CD4-positive, alpha-beta T cell (primary cell): ENCODE measurements at regions of chr16 and their contacts with region 1.

Region 1: DNA sequence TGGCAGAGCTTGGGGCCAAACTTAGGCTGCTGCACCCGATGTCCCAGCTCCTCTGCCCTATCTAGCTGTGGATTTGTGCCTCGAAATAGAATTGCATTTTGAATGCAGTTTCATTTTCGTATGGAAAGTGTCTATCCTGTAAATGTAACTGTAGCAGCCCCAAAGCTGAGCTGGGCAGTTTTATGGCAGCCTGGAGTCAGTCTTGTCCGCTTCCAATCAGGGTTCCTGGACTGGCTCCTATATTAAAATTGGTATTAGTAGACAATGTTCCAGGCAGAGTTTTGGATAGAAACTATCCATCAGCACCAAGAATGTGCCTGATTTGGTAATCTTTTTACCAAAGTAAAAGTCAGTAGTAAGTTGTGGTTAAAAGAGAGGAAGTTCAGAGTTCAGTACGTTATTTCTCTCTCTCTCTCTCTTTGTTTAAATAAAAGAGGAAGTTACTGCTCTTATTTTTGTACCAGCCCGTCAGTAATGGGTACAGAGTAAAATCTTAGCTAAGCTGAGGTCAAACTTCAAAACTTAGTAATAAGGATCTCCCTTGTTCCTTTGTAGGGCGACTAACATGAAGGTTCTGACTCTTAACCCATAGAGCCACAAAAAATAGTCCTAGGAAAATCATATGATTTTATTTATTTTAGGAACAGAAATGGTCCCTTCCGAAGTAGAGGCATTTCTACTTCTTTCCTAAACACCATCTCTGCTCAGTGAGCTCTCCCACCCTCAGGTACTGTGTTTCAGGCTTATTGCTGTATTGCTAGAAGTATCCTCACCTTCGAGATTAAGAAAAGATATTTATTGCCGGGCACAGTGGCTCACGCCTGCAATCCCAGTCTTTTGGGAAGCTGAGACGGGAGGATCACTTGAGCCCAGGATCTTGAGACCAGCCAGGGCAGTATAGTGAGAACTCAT is 28.0 kb downstream of the PRKCB start:
- DNase-seq: peak in 4 of 14 experiments; percentile 7 to 79 (median 64)
- ATAC-seq: peak; percentile 88
- H3K4me3 ChIP-seq: peak overlapping the region; percentile 43
- H3K4me3 Mint-ChIP-seq: peak overlapping the region; percentile 88
- H3K27ac ChIP-seq: peak overlapping the region; percentile 39 to 69
- H3K27ac Mint-ChIP-seq: peak overlapping the region; percentile 90
- H3K4me1 ChIP-seq: peaks cover 61% of the 10 kb centered on the region
- H3K4me1 Mint-ChIP-seq: peaks cover 86% of the 10 kb centered on the region
- H3K27me3 ChIP-seq: no peaks in the 10 kb centered on the region
- H3K27me3 Mint-ChIP-seq: no peaks in the 10 kb centered on the region
- CTCF ChIP-seq: no peak

Region 2: DNA sequence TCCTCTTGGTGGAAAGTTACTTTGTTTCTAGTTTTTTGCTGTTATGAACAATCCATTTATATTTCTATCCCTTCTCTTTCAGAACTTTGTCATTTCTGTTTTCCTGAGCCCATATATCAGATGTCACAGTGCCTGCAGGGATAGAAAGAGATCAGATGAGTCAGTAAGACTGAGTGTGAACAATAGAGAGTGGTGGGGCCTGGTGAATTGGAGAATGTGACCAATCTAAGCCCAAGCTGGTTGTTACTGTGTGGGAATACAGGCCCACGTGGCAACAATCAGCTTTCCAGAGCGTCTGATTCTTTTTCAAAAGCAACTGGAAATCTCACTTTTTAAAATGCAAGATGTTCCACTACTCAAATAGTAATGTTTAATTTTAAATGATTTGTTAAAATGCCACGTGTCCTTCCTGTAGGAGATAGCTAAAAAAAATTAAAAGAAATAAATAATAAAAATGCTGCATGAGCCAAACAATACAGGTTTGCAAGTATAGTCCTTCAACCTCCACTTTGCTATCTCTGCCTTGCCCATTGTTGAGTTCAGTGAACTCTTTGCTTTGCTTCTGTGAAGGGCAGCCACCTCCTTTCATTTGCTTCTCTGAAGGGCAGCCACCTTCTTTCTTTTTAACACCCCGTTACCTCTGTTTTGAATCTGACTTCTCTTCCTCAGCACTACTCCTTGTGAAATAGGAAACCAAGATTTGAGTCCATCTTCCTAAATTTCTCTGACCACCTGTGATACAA is 212.9 kb before region 1 on chr16:
- CTCF ChIA-PET with region 1: no interaction called
- POLR2A ChIA-PET with region 1: no interaction called
- intact Hi-C with region 1: no loop called
- DNase-seq: no peak
- ATAC-seq: no peak
- H3K4me3 ChIP-seq: no peak overlapping the region
- H3K4me3 Mint-ChIP-seq: no peak overlapping the region
- H3K27ac ChIP-seq: no peak overlapping the region
- H3K27ac Mint-ChIP-seq: no peak overlapping the region
- H3K4me1 ChIP-seq: no peaks in the 10 kb centered on the region
- H3K4me1 Mint-ChIP-seq: peaks cover 37% of the 10 kb centered on the region
- H3K27me3 ChIP-seq: no peaks in the 10 kb centered on the region
- H3K27me3 Mint-ChIP-seq: no peaks in the 10 kb centered on the region
- CTCF ChIP-seq: no peak

Region 3: GRCh38 chr16:23826528-23827045 is 37.2 kb before region 1 on chr16:
- CTCF ChIA-PET with region 1: interaction called, 3 read pairs
- POLR2A ChIA-PET with region 1: interaction called, 11 read pairs
- intact Hi-C with region 1: loop called in 1 of 2 experiments (anchors 5 kb)
- DNase-seq: peak in 5 of 14 experiments; percentile 20 to 89 (median 75)
- ATAC-seq: peak; percentile 88
- H3K4me3 ChIP-seq: peak overlapping the region; percentile 6
- H3K4me3 Mint-ChIP-seq: peak overlapping the region; percentile 80
- H3K27ac ChIP-seq: peak overlapping the region; percentile 32 to 75
- H3K27ac Mint-ChIP-seq: peak overlapping the region; percentile 89
- H3K4me1 ChIP-seq: peaks cover 27% of the 10 kb centered on the region
- H3K4me1 Mint-ChIP-seq: peaks cover 40% of the 10 kb centered on the region
- H3K27me3 ChIP-seq: no peaks in the 10 kb centered on the region
- H3K27me3 Mint-ChIP-seq: no peaks in the 10 kb centered on the region
- CTCF ChIP-seq: no peak

Region 4: DNA sequence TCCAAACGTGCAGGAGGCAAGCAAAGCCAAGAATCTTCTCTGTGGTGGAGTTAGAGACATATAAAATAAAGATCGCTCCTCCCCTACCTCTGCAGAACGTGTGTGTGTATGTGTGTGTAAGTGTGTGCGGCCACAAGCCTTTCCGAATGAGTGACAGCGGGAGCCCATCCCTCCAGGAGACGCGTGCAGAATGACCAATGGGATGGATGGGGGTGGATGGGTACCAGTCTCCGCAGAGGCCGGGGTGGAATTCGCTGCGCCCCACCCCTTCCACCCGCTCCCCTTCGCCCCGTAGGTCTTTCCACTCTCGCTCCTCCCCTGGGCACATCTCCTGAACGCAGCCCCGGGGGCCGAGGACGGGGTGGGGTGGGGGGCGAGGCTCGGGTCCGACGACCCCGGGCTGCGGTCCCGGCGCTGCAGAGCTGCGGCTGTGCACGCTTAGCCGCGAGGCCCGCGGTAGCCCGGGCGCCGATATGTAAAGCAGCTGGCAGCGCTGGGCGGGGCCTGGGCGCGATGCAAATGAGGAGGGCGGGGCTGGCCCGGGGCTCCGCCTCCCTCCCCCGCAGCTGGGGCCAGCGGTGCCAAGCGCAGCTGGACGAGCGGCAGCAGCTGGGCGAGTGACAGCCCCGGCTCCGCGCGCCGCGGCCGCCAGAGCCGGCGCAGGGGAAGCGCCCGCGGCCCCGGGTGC is 28.2 kb before region 1 on chr16 and contains the start of gene PRKCB:
- CTCF ChIA-PET with region 1: no interaction called
- POLR2A ChIA-PET with region 1: interaction called, 6 read pairs
- intact Hi-C with region 1: loop called in 1 of 2 experiments (anchors 1 kb)
- DNase-seq: peak; percentile 79 to 95 (median 88)
- ATAC-seq: peak; percentile 86
- H3K4me3 ChIP-seq: peak within 1 kb of the TSS; percentile 82
- H3K4me3 Mint-ChIP-seq: peak within 1 kb of the TSS; percentile 99
- H3K27ac ChIP-seq: peak within 1 kb of the TSS; percentile 18 to 59
- H3K27ac Mint-ChIP-seq: peak within 1 kb of the TSS; percentile 85
- H3K4me1 ChIP-seq: peaks cover 57% of the 10 kb centered on the region
- H3K4me1 Mint-ChIP-seq: peaks cover 66% of the 10 kb centered on the region
- H3K27me3 ChIP-seq: no peaks in the 10 kb centered on the region
- H3K27me3 Mint-ChIP-seq: no peaks in the 10 kb centered on the region
- CTCF ChIP-seq: no peak
- total RNA-seq, gene PRKCB: 64.7 TPM

Region 5: GRCh38 chr16:23999663-24000062 is 135.9 kb after region 1 on chr16:
- CTCF ChIA-PET with region 1: no interaction called
- POLR2A ChIA-PET with region 1: no interaction called
- intact Hi-C with region 1: no loop called
- DNase-seq: no peak
- ATAC-seq: no peak
- H3K4me3 ChIP-seq: no peak overlapping the region
- H3K4me3 Mint-ChIP-seq: no peak overlapping the region
- H3K27ac ChIP-seq: no peak overlapping the region
- H3K27ac Mint-ChIP-seq: peak overlapping the region; percentile 17
- H3K4me1 ChIP-seq: no peaks in the 10 kb centered on the region
- H3K4me1 Mint-ChIP-seq: peaks cover 27% of the 10 kb centered on the region
- H3K27me3 ChIP-seq: no peaks in the 10 kb centered on the region
- H3K27me3 Mint-ChIP-seq: no peaks in the 10 kb centered on the region
- CTCF ChIP-seq: no peak

Region 6: DNA sequence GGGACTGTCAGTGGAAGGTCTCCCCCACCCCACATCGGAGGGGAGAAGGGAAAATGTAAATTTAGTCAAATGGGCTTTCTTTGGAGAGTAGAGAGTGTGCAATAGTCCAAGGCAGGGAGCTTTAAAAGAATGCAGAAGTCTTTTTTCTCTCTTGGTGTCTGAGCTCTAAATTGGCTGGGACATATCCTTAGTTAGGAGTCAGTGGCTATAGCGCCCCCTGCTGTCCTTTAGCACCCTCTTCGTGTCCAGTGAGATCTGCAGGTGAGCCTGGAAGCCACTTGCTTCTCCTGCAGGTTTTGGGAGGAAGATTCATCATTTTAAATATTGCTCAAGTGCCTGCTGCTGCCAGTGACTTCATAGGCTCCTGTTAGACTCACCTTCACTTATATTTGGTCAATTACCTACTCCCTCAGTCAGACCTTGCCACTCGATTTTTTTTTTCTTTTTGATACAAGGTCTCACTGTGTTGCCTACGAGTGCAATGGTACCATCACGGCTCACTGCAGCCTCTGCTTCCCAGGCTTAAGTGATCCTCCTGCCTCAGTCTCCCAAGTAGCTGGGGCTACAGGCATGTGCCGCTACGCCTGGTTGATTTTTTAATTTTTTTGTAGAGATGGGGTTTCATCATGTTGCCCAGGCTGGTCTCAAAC is 146.8 kb after region 1 on chr16:
- CTCF ChIA-PET with region 1: interaction called, 3 read pairs
- POLR2A ChIA-PET with region 1: interaction called, 6 read pairs
- intact Hi-C with region 1: loop called in 1 of 2 experiments (anchors 5 kb)
- DNase-seq: peak; percentile 66 to 91 (median 78)
- ATAC-seq: peak; percentile 30
- H3K4me3 ChIP-seq: no peak overlapping the region
- H3K4me3 Mint-ChIP-seq: no peak overlapping the region
- H3K27ac ChIP-seq: no peak overlapping the region
- H3K27ac Mint-ChIP-seq: peak overlapping the region; percentile 67
- H3K4me1 ChIP-seq: peaks cover 43% of the 10 kb centered on the region
- H3K4me1 Mint-ChIP-seq: peaks cover 57% of the 10 kb centered on the region
- H3K27me3 ChIP-seq: no peaks in the 10 kb centered on the region
- H3K27me3 Mint-ChIP-seq: no peaks in the 10 kb centered on the region
- CTCF ChIP-seq: peak; percentile 84